ENCODE measurements at regions of chr4 and their contacts with region 1.

Region 1: DNA sequence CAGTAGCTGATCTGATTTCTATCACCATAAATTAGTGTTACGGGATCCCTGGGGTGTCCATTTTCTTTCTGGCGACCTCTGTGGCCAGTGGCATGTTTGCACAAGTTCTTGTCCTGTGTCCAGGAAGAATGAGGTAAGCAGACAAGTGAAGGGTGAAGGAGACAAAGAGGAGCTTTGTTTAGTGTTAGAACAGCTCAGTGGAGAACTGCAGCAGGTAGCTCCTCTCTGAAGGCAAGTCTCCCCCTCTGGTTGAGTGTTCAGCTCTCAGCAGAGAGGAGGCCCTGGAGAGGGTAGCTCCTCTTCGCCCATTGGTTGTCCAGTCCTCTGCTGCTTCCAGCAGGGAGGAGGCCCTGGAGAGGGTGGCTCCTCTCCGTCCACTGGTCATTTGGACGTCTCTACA is 47.2 kb downstream of the DMP1 start:
- DNase-seq: peak; percentile 42
- ATAC-seq: peak; percentile 56
- H3K4me3 ChIP-seq: no peak overlapping the region
- H3K27ac ChIP-seq: no peak overlapping the region
- H3K4me1 ChIP-seq: no peaks in the 10 kb centered on the region
- H3K27me3 ChIP-seq: no peaks in the 10 kb centered on the region
- CTCF ChIP-seq: no peak
- EP300 ChIP-seq: no peak
- POLR2A ChIP-seq: no peak
- RAD21 ChIP-seq: no peak

Region 2: DNA sequence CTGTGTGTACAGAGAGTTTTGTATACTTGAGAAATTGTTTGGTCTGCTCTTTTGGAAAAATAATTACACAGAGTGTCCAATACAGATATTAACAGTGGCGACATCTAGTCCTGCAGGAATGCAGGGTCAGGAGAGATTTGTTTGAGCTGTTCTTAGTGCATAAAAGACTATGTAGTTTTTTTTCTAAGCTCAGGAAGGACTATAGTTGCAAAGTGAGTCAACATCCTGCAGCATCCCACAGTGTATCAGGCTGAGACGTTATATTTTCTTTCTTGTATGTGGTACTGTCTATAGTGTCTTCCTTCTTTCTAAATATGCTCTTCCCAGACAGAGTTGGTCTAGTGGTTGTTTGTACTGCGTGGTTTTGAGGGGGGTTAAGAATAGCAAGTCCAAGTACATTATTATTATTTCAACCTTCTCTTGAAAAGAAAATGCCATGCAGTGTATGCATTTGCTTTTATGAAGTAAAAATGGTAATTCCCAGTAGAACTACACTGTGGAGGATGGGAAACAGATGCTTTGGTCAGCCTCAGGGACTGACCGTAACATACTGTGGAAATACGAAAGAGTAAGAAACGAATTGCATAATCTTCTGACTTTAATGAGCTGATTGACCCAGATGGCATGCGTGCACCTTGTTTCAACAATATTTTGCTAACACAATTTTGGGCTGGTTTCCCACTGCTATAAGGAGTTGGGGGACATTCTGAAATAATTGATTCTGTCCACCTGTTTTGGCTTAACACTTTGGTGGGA is 20.2 kb after region 1 on chr4:
- CTCF ChIA-PET with region 1: no interaction called
- POLR2A ChIA-PET with region 1: no interaction called
- in situ Hi-C with region 1: no loop called
- intact Hi-C with region 1: loop called (anchors 1 kb)
- DNase-seq: no peak
- ATAC-seq: no peak
- H3K4me3 ChIP-seq: no peak overlapping the region
- H3K27ac ChIP-seq: no peak overlapping the region
- H3K4me1 ChIP-seq: no peaks in the 10 kb centered on the region
- H3K27me3 ChIP-seq: no peaks in the 10 kb centered on the region
- CTCF ChIP-seq: no peak
- EP300 ChIP-seq: no peak
- POLR2A ChIP-seq: no peak
- RAD21 ChIP-seq: no peak